ENCODE measurements at regions of chr1 and their contacts with region 1.

Region 1: GRCh38 chr1:94504601-94505000 is 37.0 kb downstream of the F3 start:
- DNase-seq: no peak
- H3K27ac ChIP-seq: no peak overlapping the region
- CTCF ChIP-seq: no peak

Region 2: DNA sequence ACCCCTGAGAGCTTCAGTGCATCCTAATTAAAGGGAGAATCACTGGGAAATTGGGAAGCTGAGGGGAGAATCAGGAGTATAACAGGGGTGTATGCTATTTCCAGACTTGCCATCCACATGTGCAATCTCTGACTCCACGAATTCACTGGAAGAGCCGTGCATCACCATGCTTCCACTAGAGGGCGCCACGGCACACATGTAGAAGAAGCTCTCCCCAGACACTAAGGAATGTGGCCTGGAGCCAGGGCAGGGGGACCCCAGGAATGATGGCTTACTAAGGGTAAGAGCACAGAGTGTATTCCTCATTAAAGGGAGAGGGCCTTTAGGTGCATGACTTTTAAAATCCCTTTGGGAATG is 465.1 kb before region 1 on chr1:
- CTCF ChIA-PET with region 1: interaction called, 12 read pairs
- POLR2A ChIA-PET with region 1: no interaction called
- DNase-seq: peak; percentile 52
- H3K27ac ChIP-seq: no peak overlapping the region
- CTCF ChIP-seq: peak; percentile 86

Region 3: DNA sequence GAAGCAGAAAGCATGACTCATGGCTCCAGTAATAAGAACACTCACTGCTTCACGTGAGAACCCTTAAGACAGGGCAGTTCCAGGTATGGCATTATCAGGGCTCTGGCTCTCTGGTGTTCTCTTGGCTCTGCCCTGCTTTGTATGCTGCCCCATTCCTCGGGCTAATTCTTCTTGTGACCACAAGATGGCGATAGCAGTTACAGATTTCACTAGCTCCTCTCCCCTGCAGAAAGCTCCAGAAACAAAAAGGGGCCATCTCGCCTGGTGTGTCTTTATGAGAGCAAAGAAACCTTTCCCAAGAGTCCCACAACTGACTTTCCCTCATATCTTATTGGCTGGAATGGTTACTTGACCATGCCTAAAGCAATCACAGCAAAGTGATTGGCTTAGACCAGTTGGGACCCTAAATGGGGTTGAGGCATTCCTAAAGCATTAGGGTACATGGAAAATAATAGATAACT is 23.1 kb before region 1 on chr1:
- CTCF ChIA-PET with region 1: interaction called, 13 read pairs
- POLR2A ChIA-PET with region 1: no interaction called
- DNase-seq: peak; percentile 75
- H3K27ac ChIP-seq: no peak overlapping the region
- CTCF ChIP-seq: peak; percentile 84